ENCODE measurements at regions of chr20 and their contacts with region 1.

Region 1: DNA sequence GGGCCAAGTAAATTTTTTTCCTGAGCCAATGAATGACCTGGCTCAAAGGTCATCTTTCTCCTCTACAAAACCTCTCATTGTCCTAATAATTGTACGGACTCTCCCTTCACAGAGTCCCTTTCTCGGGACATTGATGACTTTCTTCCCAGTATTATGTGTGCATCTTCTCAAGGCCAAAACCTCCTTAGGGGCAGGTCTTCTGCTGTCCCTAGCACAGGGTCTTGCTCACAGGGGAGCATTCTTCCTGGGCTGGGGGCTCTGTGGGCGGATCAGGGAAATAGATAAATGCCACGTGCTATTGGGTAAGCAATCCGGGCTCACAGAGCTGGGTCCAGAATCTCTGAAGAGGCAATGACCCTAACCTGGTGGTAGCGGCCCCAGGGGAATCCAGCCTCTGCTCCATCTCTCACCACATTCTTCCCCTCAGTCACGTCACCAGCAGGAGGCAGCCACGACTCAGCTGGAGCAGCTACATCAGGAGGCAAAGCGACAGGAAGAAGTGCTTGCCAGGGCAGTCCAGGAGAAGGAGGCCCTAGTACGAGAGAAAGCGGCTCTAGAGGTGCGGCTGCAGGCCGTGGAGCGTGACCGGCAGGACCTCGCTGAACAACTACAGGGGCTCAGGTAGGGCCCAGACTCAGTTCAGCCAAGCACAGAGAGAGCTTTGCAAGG is 23.5 kb downstream of the CEP250 start:
- DNase-seq: peak in 7 of 14 experiments; percentile 4 to 38 (median 20)
- ATAC-seq: no peak
- H3K4me3 ChIP-seq: no peak overlapping the region
- H3K4me3 Mint-ChIP-seq: no peak overlapping the region
- H3K27ac ChIP-seq: no peak overlapping the region
- H3K27ac Mint-ChIP-seq: peak overlapping the region; percentile 43
- H3K4me1 ChIP-seq: no peaks in the 10 kb centered on the region
- H3K4me1 Mint-ChIP-seq: no peaks in the 10 kb centered on the region
- H3K27me3 ChIP-seq: no peaks in the 10 kb centered on the region
- H3K27me3 Mint-ChIP-seq: no peaks in the 10 kb centered on the region
- CTCF ChIP-seq: no peak

Region 2: GRCh38 chr20:35893942-35894341 is 415.0 kb after region 1 on chr20:
- CTCF ChIA-PET with region 1: no interaction called
- POLR2A ChIA-PET with region 1: no interaction called
- intact Hi-C with region 1: loop called in 1 of 2 experiments (anchors 5 kb)
- DNase-seq: no peak
- ATAC-seq: no peak
- H3K4me3 ChIP-seq: no peak overlapping the region
- H3K4me3 Mint-ChIP-seq: no peak overlapping the region
- H3K27ac ChIP-seq: no peak overlapping the region
- H3K27ac Mint-ChIP-seq: no peak overlapping the region
- H3K4me1 ChIP-seq: no peaks in the 10 kb centered on the region
- H3K4me1 Mint-ChIP-seq: no peaks in the 10 kb centered on the region
- H3K27me3 ChIP-seq: no peaks in the 10 kb centered on the region
- H3K27me3 Mint-ChIP-seq: no peaks in the 10 kb centered on the region
- CTCF ChIP-seq: no peak